H1 (cell line): ENCODE measurements at regions of chr5 and their contacts with region 1.

Region 1: GRCh38 chr5:119070828-119071572 is at the start of gene DMXL1:
- DNase-seq: peak; percentile 97 to 98
- H3K4me3 ChIP-seq: peak within 1 kb of the TSS; percentile 78 to 96 (median 85)
- H3K27ac ChIP-seq: peak within 1 kb of the TSS; percentile 84
- H3K4me1 ChIP-seq: peaks cover 0 to 7% (median 2%) of the 10 kb centered on the region in 4 experiments; a peak in 5 of 7 replicates
- H3K27me3 ChIP-seq: no peaks in the 10 kb centered on the region
- CTCF ChIP-seq: no peak
- EP300 ChIP-seq: no peak
- POLR2A ChIP-seq: peak; percentile 8 to 72
- RAD21 ChIP-seq: no peak; a peak in 1 of 4 replicates
- total RNA-seq, gene DMXL1: 43.9 and 44.8 TPM in 2 replicates

Region 2: GRCh38 chr5:119059740-119060255 is 11.2 kb before region 1 on chr5:
- CTCF ChIA-PET with region 1: no interaction called
- POLR2A ChIA-PET with region 1: interaction called, 14 read pairs
- DNase-seq: peak in 1 of 2 experiments; percentile 31
- H3K4me3 ChIP-seq: no peak overlapping the region
- H3K27ac ChIP-seq: no peak overlapping the region
- H3K4me1 ChIP-seq: no peaks in the 10 kb centered on the region
- H3K27me3 ChIP-seq: no peaks in the 10 kb centered on the region
- CTCF ChIP-seq: no peak
- EP300 ChIP-seq: no peak
- POLR2A ChIP-seq: no peak
- RAD21 ChIP-seq: no peak